Common myeloid progenitor, CD34-positive (primary cell): ENCODE measurements at regions of chr22 and their contacts with region 1.

Region 1: GRCh38 chr22:24391836-24392217 is 35.6 kb upstream of the ADORA2A start:
- DNase-seq: peak in 1 of 3 donors; percentile 31
- H3K4me3 ChIP-seq: no peak overlapping the region
- H3K27ac ChIP-seq: no peak overlapping the region
- H3K4me1 ChIP-seq: peaks cover 3 to 29% (median 15%) of the 10 kb centered on the region in 4 experiments
- H3K27me3 ChIP-seq: no peaks in the 10 kb centered on the region

Region 2: GRCh38 chr22:24325105-24325757 is 66.6 kb before region 1 on chr22:
- CTCF ChIA-PET with region 1: interaction called, 24 read pairs
- POLR2A ChIA-PET with region 1: no interaction called
- DNase-seq: peak; percentile 87 to 95 (median 95)
- H3K4me3 ChIP-seq: peak overlapping the region in 2 of 7 experiments; percentile 23 to 40
- H3K27ac ChIP-seq: peak overlapping the region in 1 of 2 experiments; percentile 3
- H3K4me1 ChIP-seq: peaks cover 6 to 14% (median 9%) of the 10 kb centered on the region in 4 experiments
- H3K27me3 ChIP-seq: no peaks in the 10 kb centered on the region

Region 3: GRCh38 chr22:24380220-24380904 is 11.5 kb before region 1 on chr22:
- CTCF ChIA-PET with region 1: interaction called, 20 read pairs
- POLR2A ChIA-PET with region 1: no interaction called
- DNase-seq: peak in 1 of 3 donors; percentile 27
- H3K4me3 ChIP-seq: peak overlapping the region in 1 of 7 experiments; percentile 28
- H3K27ac ChIP-seq: peak overlapping the region in 1 of 2 experiments; percentile 68
- H3K4me1 ChIP-seq: peaks cover 2 to 21% (median 16%) of the 10 kb centered on the region in 4 experiments
- H3K27me3 ChIP-seq: no peaks in the 10 kb centered on the region

Region 4: GRCh38 chr22:24407278-24407665 is 15.4 kb after region 1 on chr22:
- CTCF ChIA-PET with region 1: interaction called, 13 read pairs
- POLR2A ChIA-PET with region 1: no interaction called
- DNase-seq: peak in 1 of 3 donors; percentile 25
- H3K4me3 ChIP-seq: peak overlapping the region in 2 of 7 experiments; percentile 3 to 48
- H3K27ac ChIP-seq: no peak overlapping the region
- H3K4me1 ChIP-seq: peaks cover 0 to 33% (median 28%) of the 10 kb centered on the region in 4 experiments
- H3K27me3 ChIP-seq: no peaks in the 10 kb centered on the region

Region 5: GRCh38 chr22:24525416-24526037 is 133.7 kb after region 1 on chr22:
- CTCF ChIA-PET with region 1: no interaction called
- POLR2A ChIA-PET with region 1: no interaction called
- DNase-seq: peak; percentile 76 to 89 (median 84)
- H3K4me3 ChIP-seq: no peak overlapping the region
- H3K27ac ChIP-seq: no peak overlapping the region
- H3K4me1 ChIP-seq: peaks cover 0 to 9% (median 7%) of the 10 kb centered on the region in 4 experiments
- H3K27me3 ChIP-seq: no peaks in the 10 kb centered on the region